ENCODE measurements at regions of chr1 and their contacts with region 1.

Region 1: GRCh38 chr1:169786974-169787373 is 7.7 kb downstream of the METTL18 start:
- DNase-seq: no peak
- ATAC-seq: no peak

Region 2: GRCh38 chr1:168794057-168794456 is 992.9 kb before region 1 on chr1:
- intact Hi-C with region 1: loop called (anchors 5 kb)
- DNase-seq: no peak
- ATAC-seq: no peak